ENCODE measurements at regions of chr9 and their contacts with region 1.

Region 1: DNA sequence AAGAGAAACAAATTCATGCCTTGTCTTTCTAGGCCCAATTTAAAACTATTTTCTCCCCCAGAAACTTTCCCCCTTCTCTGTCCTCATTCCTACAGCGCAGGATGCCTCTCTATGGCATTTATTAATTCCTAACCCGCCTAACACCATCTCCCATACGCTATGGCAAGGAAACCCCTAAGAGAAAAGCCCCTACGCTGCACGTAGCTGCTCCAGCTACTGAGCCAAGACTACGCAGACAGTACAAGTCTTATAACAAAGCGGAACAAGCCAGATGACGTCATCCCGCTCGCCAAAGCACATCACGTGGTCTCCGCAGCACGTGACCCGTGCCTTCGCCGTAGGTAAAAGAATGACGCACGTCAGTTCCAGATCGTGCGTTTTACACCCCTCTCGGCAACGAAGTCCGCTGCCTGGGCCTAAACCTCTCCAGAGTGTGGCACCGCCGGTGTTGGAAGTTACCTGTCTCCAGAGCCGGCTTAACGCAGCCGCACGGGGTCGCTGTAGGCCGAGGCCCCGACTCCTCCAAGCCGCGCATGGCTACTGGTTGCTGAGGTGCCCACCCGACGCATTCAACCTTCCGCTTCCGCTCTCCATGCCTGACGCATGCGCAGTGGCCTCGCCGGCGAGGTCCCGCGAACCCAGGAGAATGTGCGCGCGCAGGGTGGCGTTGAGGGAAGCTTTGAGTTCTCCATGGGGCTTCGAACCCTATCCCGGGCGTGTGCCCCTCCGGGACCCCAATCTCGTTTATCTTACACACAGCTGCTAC is at the start of gene TRMO:
- DNase-seq: peak; percentile 97
- ATAC-seq: peak; percentile 74
- H3K4me3 Mint-ChIP-seq: peak within 1 kb of the TSS; percentile 85
- H3K27ac Mint-ChIP-seq: peak within 1 kb of the TSS; percentile 95
- H3K4me1 Mint-ChIP-seq: peaks cover 57% of the 10 kb centered on the region
- H3K27me3 Mint-ChIP-seq: peaks cover 2% of the 10 kb centered on the region
- CTCF ChIP-seq: no peak
- total RNA-seq, gene TRMO: 25.3 and 32.4 TPM in 2 replicates

Region 2: GRCh38 chr9:97710356-97711222 is 211.6 kb before region 1 on chr9:
- CTCF ChIA-PET with region 1: no interaction called
- POLR2A ChIA-PET with region 1: no interaction called
- intact Hi-C with region 1: loop called (anchors 1 kb)
- DNase-seq: no peak
- ATAC-seq: peak; percentile 83
- H3K4me3 Mint-ChIP-seq: no peak overlapping the region
- H3K27ac Mint-ChIP-seq: no peak overlapping the region
- H3K4me1 Mint-ChIP-seq: no peaks in the 10 kb centered on the region
- H3K27me3 Mint-ChIP-seq: peaks cover 37% of the 10 kb centered on the region
- CTCF ChIP-seq: peak; percentile 49

Region 3: GRCh38 chr9:97873877-97874276 is 48.3 kb before region 1 on chr9:
- CTCF ChIA-PET with region 1: no interaction called
- POLR2A ChIA-PET with region 1: no interaction called
- intact Hi-C with region 1: no loop called
- DNase-seq: no peak
- ATAC-seq: no peak
- H3K4me3 Mint-ChIP-seq: no peak overlapping the region
- H3K27ac Mint-ChIP-seq: no peak overlapping the region
- H3K4me1 Mint-ChIP-seq: no peaks in the 10 kb centered on the region
- H3K27me3 Mint-ChIP-seq: peaks cover 14% of the 10 kb centered on the region
- CTCF ChIP-seq: no peak

Region 4: GRCh38 chr9:97964901-97965300 is 42.8 kb after region 1 on chr9:
- CTCF ChIA-PET with region 1: no interaction called
- POLR2A ChIA-PET with region 1: no interaction called
- intact Hi-C with region 1: no loop called
- DNase-seq: no peak
- ATAC-seq: no peak
- H3K4me3 Mint-ChIP-seq: no peak overlapping the region
- H3K27ac Mint-ChIP-seq: no peak overlapping the region
- H3K4me1 Mint-ChIP-seq: no peaks in the 10 kb centered on the region
- H3K27me3 Mint-ChIP-seq: peaks cover 9% of the 10 kb centered on the region
- CTCF ChIP-seq: no peak

Region 5: GRCh38 chr9:97982683-97983588 is 60.8 kb after region 1 on chr9 and contains the start of gene ANP32B:
- CTCF ChIA-PET with region 1: interaction called, 15 read pairs
- POLR2A ChIA-PET with region 1: interaction called, 94 read pairs
- intact Hi-C with region 1: loop called (anchors 1 kb)
- DNase-seq: peak; percentile 95
- ATAC-seq: peak; percentile 80
- H3K4me3 Mint-ChIP-seq: peak within 1 kb of the TSS; percentile 86
- H3K27ac Mint-ChIP-seq: peak within 1 kb of the TSS; percentile 92
- H3K4me1 Mint-ChIP-seq: peaks cover 38% of the 10 kb centered on the region
- H3K27me3 Mint-ChIP-seq: no peaks in the 10 kb centered on the region
- CTCF ChIP-seq: no peak
- total RNA-seq, gene ANP32B: 162 and 173 TPM in 2 replicates

Region 6: GRCh38 chr9:98056269-98057137 is 134.4 kb after region 1 on chr9 and contains the start of gene NANS:
- CTCF ChIA-PET with region 1: interaction called, 4 read pairs
- POLR2A ChIA-PET with region 1: interaction called, 19 read pairs
- intact Hi-C with region 1: loop called (anchors 1 kb)
- DNase-seq: peak; percentile 87
- ATAC-seq: peak; percentile 97
- H3K4me3 Mint-ChIP-seq: peak within 1 kb of the TSS; percentile 97
- H3K27ac Mint-ChIP-seq: peak within 1 kb of the TSS; percentile 94
- H3K4me1 Mint-ChIP-seq: peaks cover 14% of the 10 kb centered on the region
- H3K27me3 Mint-ChIP-seq: no peaks in the 10 kb centered on the region
- CTCF ChIP-seq: no peak
- total RNA-seq, gene NANS: 21.6 and 21.8 TPM in 2 replicates

Region 7: GRCh38 chr9:98201102-98201501 is 279.0 kb after region 1 on chr9:
- CTCF ChIA-PET with region 1: interaction called, 3 read pairs
- POLR2A ChIA-PET with region 1: no interaction called
- intact Hi-C with region 1: loop called (anchors 1 kb)
- DNase-seq: no peak
- ATAC-seq: peak; percentile 76
- H3K4me3 Mint-ChIP-seq: no peak overlapping the region
- H3K27ac Mint-ChIP-seq: peak overlapping the region; percentile 44
- H3K4me1 Mint-ChIP-seq: peaks cover 13% of the 10 kb centered on the region
- H3K27me3 Mint-ChIP-seq: no peaks in the 10 kb centered on the region
- CTCF ChIP-seq: no peak

Region 8: DNA sequence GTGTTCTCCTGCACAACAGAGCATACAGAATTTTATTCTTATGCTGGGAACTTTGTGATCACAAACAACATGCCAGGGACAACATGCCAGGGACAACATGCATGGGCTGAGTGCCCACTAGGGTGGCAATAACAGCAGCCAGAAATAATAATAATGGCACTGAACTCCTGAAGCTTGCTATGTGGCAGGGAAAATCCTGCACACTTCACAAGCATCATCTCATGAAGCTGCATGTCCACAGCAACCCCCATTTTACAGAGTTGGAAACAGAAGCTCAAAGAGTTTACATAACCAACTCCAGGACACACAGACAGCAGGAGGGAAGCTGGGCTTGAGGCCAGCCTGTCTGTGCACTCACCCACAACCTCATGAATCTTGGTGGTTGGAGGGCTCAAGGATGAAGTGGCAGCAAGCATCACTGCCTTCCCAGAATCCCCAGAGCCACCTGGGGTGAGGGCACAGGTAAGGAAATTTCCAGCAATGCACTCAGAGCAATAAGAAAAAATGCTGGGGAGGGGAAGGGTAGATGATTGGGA is 675.2 kb after region 1 on chr9:
- CTCF ChIA-PET with region 1: no interaction called
- POLR2A ChIA-PET with region 1: no interaction called
- intact Hi-C with region 1: no loop called
- DNase-seq: no peak
- ATAC-seq: no peak
- H3K4me3 Mint-ChIP-seq: no peak overlapping the region
- H3K27ac Mint-ChIP-seq: no peak overlapping the region
- H3K4me1 Mint-ChIP-seq: no peaks in the 10 kb centered on the region
- H3K27me3 Mint-ChIP-seq: no peaks in the 10 kb centered on the region
- CTCF ChIP-seq: no peak

Region 9: DNA sequence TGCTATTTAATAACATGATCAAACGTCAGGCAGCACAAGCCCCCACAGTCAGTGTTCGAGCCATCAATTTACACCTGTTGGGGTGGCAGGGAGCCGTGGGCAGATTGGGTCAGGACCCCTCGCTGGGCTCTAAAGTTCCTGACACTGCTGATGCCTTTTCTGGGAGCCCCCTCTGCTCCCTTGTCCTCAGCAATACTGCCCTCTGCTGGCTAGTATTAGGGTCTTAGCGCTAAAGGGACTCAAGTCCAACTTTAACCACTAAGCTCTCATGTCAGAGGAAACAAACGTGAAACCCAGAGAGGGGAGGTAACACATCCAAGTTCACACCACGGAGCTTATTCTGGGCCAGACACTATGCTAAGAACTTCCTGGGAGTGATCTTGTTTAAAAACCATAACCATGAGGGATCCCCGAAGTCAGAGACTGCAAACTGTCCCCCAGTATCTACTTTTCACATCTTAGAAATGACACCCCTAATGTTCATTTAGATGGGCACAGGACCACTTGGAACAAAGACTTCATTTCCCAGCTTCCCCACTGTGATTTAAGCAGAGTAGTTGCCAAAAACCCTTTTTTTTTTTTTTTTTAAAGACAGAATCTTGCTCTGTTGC is 853.8 kb after region 1 on chr9:
- CTCF ChIA-PET with region 1: interaction called, 6 read pairs
- POLR2A ChIA-PET with region 1: no interaction called
- intact Hi-C with region 1: loop called (anchors 1 kb)
- DNase-seq: no peak
- ATAC-seq: peak; percentile 42
- H3K4me3 Mint-ChIP-seq: no peak overlapping the region
- H3K27ac Mint-ChIP-seq: no peak overlapping the region
- H3K4me1 Mint-ChIP-seq: no peaks in the 10 kb centered on the region
- H3K27me3 Mint-ChIP-seq: no peaks in the 10 kb centered on the region
- CTCF ChIP-seq: no peak

Measured in activated B cell treated with CpG ODN at 0.5 μM for 24 hours (primary cell).